GM10248 (cell line): ENCODE measurements at regions of chr15 and their contacts with region 1.

Region 1: GRCh38 chr15:40928821-40929659 is at the start of gene DLL4:
- DNase-seq: peak; percentile 63
- CTCF ChIP-seq: no peak

Region 2: DNA sequence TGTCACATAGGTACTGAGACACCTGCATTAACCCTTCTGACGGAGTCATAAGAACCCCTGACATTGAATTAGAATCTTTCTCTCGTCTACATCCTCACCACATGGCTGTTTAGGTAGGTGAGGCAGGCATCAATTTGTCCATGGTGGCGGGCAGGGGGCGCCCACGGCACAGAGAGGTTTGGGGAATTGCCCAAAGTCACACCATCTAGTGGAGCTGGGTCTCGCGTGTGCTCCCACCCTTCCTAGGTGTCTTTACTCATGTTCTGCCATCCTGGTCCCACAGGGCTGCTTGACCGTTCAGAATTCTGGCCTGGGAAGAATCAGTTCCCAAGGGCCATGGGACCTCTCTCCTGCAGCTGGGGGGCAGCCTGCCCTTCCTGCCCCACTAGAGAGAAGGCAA is 14.6 kb before region 1 on chr15:
- CTCF ChIA-PET with region 1: interaction called, 131 read pairs
- POLR2A ChIA-PET with region 1: no interaction called
- DNase-seq: no peak
- CTCF ChIP-seq: peak; percentile 15

Region 3: DNA sequence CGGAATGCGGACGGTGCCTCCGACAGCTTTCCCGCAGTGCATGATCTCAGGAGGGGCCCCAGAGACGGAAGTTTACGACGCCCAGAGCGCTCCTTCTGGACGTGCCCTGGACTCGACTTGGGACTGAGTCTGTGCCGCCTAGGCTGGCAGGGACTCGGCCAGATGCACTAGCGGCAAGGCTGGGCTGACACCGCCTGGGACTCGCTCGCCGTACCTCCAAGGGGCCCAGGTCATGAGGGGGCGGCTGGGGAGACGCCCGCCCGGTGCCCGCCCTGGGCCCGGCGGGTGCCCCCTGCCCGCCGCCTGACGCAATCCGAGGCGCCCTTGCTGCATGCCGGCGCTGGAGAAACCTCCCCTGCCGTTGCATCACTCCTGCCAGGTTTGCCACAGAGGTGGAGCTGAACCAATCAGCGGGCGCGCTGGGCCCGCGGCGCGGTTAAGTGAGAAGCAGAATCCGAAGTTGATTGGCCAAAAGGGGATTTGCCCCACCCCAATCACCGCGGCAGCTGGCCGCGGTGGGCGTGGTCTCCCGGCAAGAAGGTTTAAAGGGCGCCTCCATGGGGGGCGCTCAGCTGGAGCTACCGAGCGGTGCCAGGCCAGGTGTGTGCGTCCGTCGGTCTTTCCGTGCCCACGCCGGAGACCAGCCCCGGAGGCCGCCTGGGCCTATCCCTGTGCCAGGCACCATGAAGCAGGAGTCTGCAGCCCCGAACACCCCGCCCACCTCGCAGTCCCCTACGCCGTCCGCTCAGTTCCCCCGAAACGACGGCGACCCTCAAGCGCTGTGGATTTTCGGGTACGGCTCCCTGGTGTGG is 24.1 kb after region 1 on chr15 and contains the start of gene CHAC1:
- CTCF ChIA-PET with region 1: interaction called, 26 read pairs
- POLR2A ChIA-PET with region 1: interaction called, 4 read pairs
- DNase-seq: peak; percentile 99
- CTCF ChIP-seq: peak; percentile 16

Region 4: GRCh38 chr15:41022487-41023090 is 93.5 kb after region 1 on chr15:
- CTCF ChIA-PET with region 1: interaction called, 27 read pairs
- POLR2A ChIA-PET with region 1: interaction called, 3 read pairs
- DNase-seq: peak; percentile 37
- CTCF ChIP-seq: peak; percentile 65